ENCODE measurements at regions of chr2 and their contacts with region 1.

Region 1: DNA sequence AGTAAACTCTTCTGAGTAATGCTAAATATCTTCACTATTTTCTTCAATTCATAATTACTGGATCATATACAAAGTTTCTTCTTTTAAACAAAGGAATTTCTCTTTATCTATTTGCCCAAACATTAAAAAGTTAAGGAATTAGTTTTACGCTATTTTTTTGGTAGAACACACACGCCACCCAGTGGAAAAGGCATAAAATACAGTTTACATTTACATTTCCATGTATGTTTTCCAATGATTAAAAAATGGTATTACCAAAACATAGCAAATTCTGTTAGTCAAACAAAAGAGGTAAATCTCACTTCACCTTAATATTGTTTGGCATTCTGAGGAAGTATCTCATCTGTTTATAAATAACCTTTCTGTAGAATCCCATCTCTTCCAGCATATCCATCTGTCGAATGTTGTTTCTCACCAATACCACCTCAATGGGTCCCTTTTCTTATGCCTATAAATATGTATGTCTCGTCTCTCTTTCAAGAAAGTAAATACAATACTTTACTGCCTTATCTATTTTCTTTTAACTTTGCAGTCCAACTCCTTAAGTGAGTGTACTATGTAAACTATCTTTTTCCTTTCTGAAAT is 7.2 kb downstream of the BOLL start:
- DNase-seq: no peak
- ATAC-seq: no peak
- H3K4me3 ChIP-seq: no peak overlapping the region
- H3K27ac ChIP-seq: no peak overlapping the region
- H3K4me1 ChIP-seq: no peaks in the 10 kb centered on the region
- H3K27me3 ChIP-seq: peaks cover 0 to 5% (median 0%) of the 10 kb centered on the region in 7 donors
- CTCF ChIP-seq: peak; percentile 57 to 87 (median 73)

Region 2: GRCh38 chr2:197383823-197384222 is 394.1 kb before region 1 on chr2:
- intact Hi-C with region 1: loop called in 1 of 10 experiments (anchors 10 kb)
- DNase-seq: no peak
- ATAC-seq: no peak
- H3K4me3 ChIP-seq: no peak overlapping the region
- H3K27ac ChIP-seq: no peak overlapping the region
- H3K4me1 ChIP-seq: no peaks in the 10 kb centered on the region
- H3K27me3 ChIP-seq: no peaks in the 10 kb centered on the region
- CTCF ChIP-seq: no peak

Region 3: GRCh38 chr2:197710424-197711042 is 67.4 kb before region 1 on chr2:
- intact Hi-C with region 1: loop called (anchors 2 to 5 kb)
- DNase-seq: no peak
- ATAC-seq: no peak
- H3K4me3 ChIP-seq: no peak overlapping the region
- H3K27ac ChIP-seq: no peak overlapping the region
- H3K4me1 ChIP-seq: peaks cover 2 to 44% (median 40%) of the 10 kb centered on the region in 9 donors
- H3K27me3 ChIP-seq: no peaks in the 10 kb centered on the region
- CTCF ChIP-seq: no peak

Region 4: DNA sequence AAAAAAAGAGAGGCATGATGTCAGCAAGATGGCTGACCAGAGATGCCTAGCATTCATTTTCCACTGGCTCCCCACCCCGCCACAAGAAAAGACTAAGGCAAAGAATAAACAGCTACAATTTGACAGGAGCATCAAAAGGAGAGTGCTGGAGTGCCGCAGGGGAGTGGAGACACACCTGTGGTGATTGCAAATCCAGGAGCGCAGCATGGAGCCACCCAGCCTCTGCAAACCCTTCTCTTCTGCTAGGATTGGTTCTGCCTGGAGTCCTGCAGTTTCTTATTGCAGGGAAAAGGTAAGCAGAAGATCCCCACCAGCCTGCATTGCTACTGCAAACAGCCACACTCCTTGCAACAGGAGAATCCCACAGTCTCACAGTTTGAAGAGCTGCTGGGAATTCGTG is 18.9 kb before region 1 on chr2:
- intact Hi-C with region 1: no loop called
- DNase-seq: no peak
- ATAC-seq: no peak
- H3K4me3 ChIP-seq: no peak overlapping the region
- H3K27ac ChIP-seq: no peak overlapping the region
- H3K4me1 ChIP-seq: no peaks in the 10 kb centered on the region
- H3K27me3 ChIP-seq: no peaks in the 10 kb centered on the region
- CTCF ChIP-seq: no peak

Region 5: GRCh38 chr2:197857476-197858107 is 79.7 kb after region 1 on chr2:
- intact Hi-C with region 1: no loop called
- DNase-seq: no peak
- ATAC-seq: peak in 1 of 8 donors; percentile 27
- H3K4me3 ChIP-seq: no peak overlapping the region
- H3K27ac ChIP-seq: peak overlapping the region in 1 of 10 donors; percentile 17
- H3K4me1 ChIP-seq: peaks cover 0 to 55% (median 19%) of the 10 kb centered on the region in 9 donors
- H3K27me3 ChIP-seq: no peaks in the 10 kb centered on the region
- CTCF ChIP-seq: no peak

Measured in heart right ventricle (tissue), 16 donors.